ENCODE measurements at regions of chr22 and their contacts with region 1.

Region 1: GRCh38 chr22:37686002-37686982 is at the start of gene NOL12:
- DNase-seq: peak; percentile 81
- H3K4me3 Mint-ChIP-seq: peak within 1 kb of the TSS; percentile 92
- H3K27ac Mint-ChIP-seq: peak within 1 kb of the TSS; percentile 85
- H3K4me1 Mint-ChIP-seq: peaks cover 32% of the 10 kb centered on the region
- H3K27me3 Mint-ChIP-seq: no peaks in the 10 kb centered on the region
- total RNA-seq, gene NOL12: 26.7 to 30.4 TPM

Region 2: GRCh38 chr22:37633625-37634416 is 52.5 kb before region 1 on chr22:
- CTCF ChIA-PET with region 1: interaction called, 32 read pairs
- intact Hi-C with region 1: no loop called
- DNase-seq: peak; percentile 79
- H3K4me3 Mint-ChIP-seq: peak overlapping the region; percentile 54
- H3K27ac Mint-ChIP-seq: peak overlapping the region; percentile 83
- H3K4me1 Mint-ChIP-seq: peaks cover 55% of the 10 kb centered on the region
- H3K27me3 Mint-ChIP-seq: no peaks in the 10 kb centered on the region

Region 3: GRCh38 chr22:37745548-37746365 is 59.5 kb after region 1 on chr22:
- CTCF ChIA-PET with region 1: no interaction called
- intact Hi-C with region 1: loop called (anchors 2 kb)
- DNase-seq: peak; percentile 91
- H3K4me3 Mint-ChIP-seq: peak overlapping the region; percentile 78
- H3K27ac Mint-ChIP-seq: peak overlapping the region; percentile 77
- H3K4me1 Mint-ChIP-seq: peaks cover 14% of the 10 kb centered on the region
- H3K27me3 Mint-ChIP-seq: no peaks in the 10 kb centered on the region

Region 4: GRCh38 chr22:38214256-38215056 is 528.2 kb after region 1 on chr22:
- CTCF ChIA-PET with region 1: no interaction called
- intact Hi-C with region 1: no loop called
- DNase-seq: peak; percentile 65
- H3K4me3 Mint-ChIP-seq: peak overlapping the region; percentile 12
- H3K27ac Mint-ChIP-seq: no peak overlapping the region
- H3K4me1 Mint-ChIP-seq: peaks cover 25% of the 10 kb centered on the region
- H3K27me3 Mint-ChIP-seq: no peaks in the 10 kb centered on the region

Measured in activated naive CD4-positive, alpha-beta T cell treated with anti-CD3 and anti-CD28 coated beads for 36 hours (primary cell).